Activated T-helper 1 cell treated with anti-CD3 and anti-CD28 coated beads, Interleukin-12 subunit alpha, Interleukin-12 subunit beta, Interleukin-2, Interleukin-4 antibody, amounts not matched to agents 30 ng/mL and 10 ng/mL and 1 ng/mL, durations not matched to agents 14 hours and 24 hours and 36 hours (primary cell): ENCODE measurements at regions of chr15 and their contacts with region 1.

Region 1: DNA sequence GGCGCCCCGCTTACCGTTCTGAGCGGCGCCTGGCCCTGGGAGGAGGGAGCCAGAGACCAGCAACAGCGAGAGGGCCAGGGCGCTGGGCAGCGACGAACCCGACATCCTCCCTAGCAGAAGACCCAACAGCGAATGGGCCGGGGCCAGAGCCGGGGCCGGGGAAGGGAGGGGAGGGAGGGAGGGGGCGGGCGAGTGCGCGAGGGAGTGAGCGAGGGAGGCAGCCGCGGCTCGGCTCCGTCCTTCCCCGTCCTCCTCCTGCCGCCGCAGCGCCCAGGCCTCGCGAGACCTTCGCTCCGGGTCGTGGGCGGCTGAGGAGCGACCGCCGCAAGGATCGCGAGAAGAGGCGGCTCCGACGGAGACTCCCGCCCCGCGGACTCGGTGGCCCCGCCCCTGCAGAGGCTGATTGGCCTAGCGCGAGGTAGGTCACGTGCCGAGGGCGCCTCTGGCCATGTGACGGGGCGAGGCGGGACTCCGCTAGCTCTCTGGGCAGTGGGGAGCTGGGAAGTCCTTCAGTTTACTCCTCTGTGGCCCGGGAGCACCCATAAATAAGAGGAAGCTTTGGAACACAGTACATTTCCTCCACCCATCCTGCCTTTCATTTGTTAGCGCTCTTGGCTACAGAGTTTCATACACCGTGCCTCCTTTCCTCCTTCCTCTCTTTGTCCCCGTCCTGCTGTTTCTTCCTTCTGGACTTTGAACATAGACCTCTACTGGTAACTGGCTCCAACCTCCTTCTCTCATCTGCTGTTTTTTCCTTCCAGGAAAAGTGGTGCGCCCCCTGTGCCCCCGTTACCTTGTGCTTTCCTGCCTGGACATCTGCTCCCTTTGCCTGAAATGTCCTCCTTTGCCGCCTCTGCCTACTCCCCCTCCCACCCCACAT is at the start of gene NPTN:
- DNase-seq: peak; percentile 99
- H3K4me3 Mint-ChIP-seq: peak within 1 kb of the TSS; percentile 89
- H3K27ac Mint-ChIP-seq: peak within 1 kb of the TSS; percentile 74
- H3K4me1 Mint-ChIP-seq: peaks cover 54% of the 10 kb centered on the region
- H3K27me3 Mint-ChIP-seq: peaks cover 10% of the 10 kb centered on the region
- total RNA-seq, gene NPTN: 91.1 and 91.2 TPM in 2 replicates

Region 2: GRCh38 chr15:72685925-72686794 is 947.2 kb before region 1 on chr15 and contains the starts of genes BBS4 and HIGD2B:
- intact Hi-C with region 1: loop called (anchors 2 kb)
- DNase-seq: peak; percentile 84
- H3K4me3 Mint-ChIP-seq: peak within 1 kb of the TSS; percentile 93
- H3K27ac Mint-ChIP-seq: peak within 1 kb of the TSS; percentile 87
- H3K4me1 Mint-ChIP-seq: peaks cover 21% of the 10 kb centered on the region
- H3K27me3 Mint-ChIP-seq: peaks cover 4% of the 10 kb centered on the region
- total RNA-seq, gene BBS4: 10.0 and 10.3 TPM in 2 replicates
- total RNA-seq, gene HIGD2B: 0.29 TPM in 1 of 2 replicates, not detected in the other

Region 3: GRCh38 chr15:73284090-73284716 is 349.1 kb before region 1 on chr15:
- intact Hi-C with region 1: loop called (anchors 1 kb)
- DNase-seq: no peak
- H3K4me3 Mint-ChIP-seq: no peak overlapping the region
- H3K27ac Mint-ChIP-seq: no peak overlapping the region
- H3K4me1 Mint-ChIP-seq: peaks cover 4% of the 10 kb centered on the region
- H3K27me3 Mint-ChIP-seq: peaks cover 3% of the 10 kb centered on the region

Region 4: DNA sequence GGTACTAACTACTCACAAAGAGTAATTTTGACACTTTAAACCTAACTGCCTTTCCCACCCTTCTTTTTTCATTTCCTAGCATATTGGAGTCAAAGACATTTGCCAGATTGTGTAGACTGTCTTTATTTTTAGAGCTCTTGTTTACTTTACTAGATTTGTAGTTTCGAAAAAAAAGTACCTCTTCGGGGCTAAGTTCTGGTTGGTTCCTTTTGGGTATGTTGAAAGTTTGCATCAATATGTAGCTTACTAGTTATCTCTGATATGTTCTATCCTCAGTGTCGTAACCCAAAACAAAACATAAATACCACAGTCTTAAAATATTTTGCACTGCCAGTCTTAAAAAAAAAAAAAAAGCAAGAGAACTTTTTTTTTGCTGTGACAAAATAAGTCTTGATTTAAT is 138.2 kb before region 1 on chr15:
- intact Hi-C with region 1: no loop called
- DNase-seq: no peak
- H3K4me3 Mint-ChIP-seq: no peak overlapping the region
- H3K27ac Mint-ChIP-seq: no peak overlapping the region
- H3K4me1 Mint-ChIP-seq: no peaks in the 10 kb centered on the region
- H3K27me3 Mint-ChIP-seq: peaks cover 29% of the 10 kb centered on the region

Region 5: DNA sequence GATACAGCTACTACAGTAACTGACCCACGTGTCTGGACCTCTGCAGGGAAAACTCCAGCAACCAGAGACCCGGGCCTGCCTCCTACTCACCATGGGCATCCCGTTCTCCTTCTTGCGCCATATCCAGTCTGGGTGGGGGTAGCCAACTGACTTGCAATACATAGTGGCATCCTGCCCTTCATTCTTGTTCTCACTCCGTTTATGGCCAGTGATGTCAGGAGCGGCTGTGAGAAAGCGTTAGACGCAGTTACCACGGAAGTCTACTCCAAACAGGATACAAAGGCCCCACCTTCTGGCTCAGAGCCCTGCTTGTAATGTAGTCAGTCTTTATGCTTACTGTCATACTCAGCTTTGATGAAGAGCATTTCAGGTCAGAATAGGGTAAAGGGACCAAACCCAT is 59.8 kb before region 1 on chr15:
- intact Hi-C with region 1: loop called (anchors 1 kb)
- DNase-seq: no peak
- H3K4me3 Mint-ChIP-seq: no peak overlapping the region
- H3K27ac Mint-ChIP-seq: no peak overlapping the region
- H3K4me1 Mint-ChIP-seq: peaks cover 71% of the 10 kb centered on the region
- H3K27me3 Mint-ChIP-seq: no peaks in the 10 kb centered on the region

Region 6: DNA sequence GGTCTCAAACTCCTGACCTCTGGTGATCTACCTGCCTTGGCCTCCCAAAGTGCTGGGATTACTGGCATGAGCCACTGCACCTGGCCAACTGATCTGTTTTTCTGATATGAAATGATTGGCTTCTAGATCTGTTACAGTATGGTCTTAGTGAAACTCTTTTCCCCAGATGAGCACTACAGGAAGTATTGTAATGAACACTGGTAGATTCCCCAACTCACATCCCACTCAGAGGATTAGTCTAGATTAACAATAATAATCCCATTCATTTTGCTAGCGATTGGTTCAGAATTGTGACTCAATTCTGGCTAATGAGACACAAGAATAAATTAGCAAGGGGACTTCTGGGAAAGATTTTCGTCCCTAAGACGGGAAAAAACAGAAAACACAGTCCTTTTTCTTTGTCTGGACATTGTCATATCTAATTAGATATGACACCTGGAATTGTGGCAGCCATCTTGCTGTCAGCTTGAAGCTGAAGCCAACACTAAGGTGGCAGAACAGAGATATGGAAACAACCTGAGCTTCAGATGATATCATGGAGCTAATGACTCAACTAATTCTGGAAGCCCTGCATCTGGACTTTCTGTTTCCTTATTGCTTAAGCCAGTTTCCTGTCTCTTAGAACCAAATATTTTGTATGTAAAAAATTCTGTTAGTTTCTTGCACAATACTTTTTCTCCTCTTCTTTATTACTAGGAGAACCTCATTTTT is 17.2 kb after region 1 on chr15:
- intact Hi-C with region 1: loop called (anchors 2 kb)
- DNase-seq: no peak
- H3K4me3 Mint-ChIP-seq: no peak overlapping the region
- H3K27ac Mint-ChIP-seq: peak overlapping the region; percentile 47
- H3K4me1 Mint-ChIP-seq: peaks cover 12% of the 10 kb centered on the region
- H3K27me3 Mint-ChIP-seq: peaks cover 9% of the 10 kb centered on the region

Region 7: GRCh38 chr15:73704869-73705645 is 71.7 kb after region 1 on chr15:
- intact Hi-C with region 1: loop called (anchors 1 kb)
- DNase-seq: peak; percentile 59
- H3K4me3 Mint-ChIP-seq: no peak overlapping the region
- H3K27ac Mint-ChIP-seq: no peak overlapping the region
- H3K4me1 Mint-ChIP-seq: peaks cover 13% of the 10 kb centered on the region
- H3K27me3 Mint-ChIP-seq: peaks cover 19% of the 10 kb centered on the region